Dendritic cell treated with granulocyte-macrophage colony-stimulating factor and Interleukin-4, amounts not matched to agents 40 ng/mL and 50 ng/mL, for 4 days (primary cell): ENCODE measurements at regions of chr18 and their contacts with region 1.

Region 1: DNA sequence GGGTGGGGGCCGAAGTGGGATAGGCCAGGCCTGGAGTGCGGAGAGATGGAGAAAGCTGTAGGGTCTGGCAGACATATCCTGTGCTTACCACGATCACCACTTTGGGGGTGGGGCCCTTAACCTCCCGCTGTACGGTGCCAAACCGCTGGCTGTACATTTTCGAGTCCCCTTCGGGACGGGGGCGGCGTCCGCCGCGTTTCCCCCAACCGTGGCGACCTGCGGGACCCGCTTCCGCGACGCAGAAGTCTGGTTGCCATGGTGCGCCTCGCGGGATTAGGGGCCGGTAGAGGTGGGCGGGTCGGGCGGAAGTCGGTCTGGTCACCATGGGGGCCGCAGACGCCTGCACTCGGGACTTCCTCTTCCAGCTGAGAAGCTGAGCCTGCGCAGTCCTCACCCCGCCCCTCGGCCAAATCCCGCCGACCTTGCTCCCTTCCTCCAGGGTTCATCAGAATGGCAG is at the start of gene CFAP53:
- H3K4me3 Mint-ChIP-seq: peak within 1 kb of the TSS; percentile 86
- H3K27ac Mint-ChIP-seq: peak within 1 kb of the TSS; percentile 81
- H3K4me1 Mint-ChIP-seq: peaks cover 27% of the 10 kb centered on the region
- H3K27me3 Mint-ChIP-seq: peaks cover 18% of the 10 kb centered on the region

Region 2: GRCh38 chr18:50231621-50232020 is 34.7 kb before region 1 on chr18:
- intact Hi-C with region 1: no loop called
- H3K4me3 Mint-ChIP-seq: no peak overlapping the region
- H3K27ac Mint-ChIP-seq: no peak overlapping the region
- H3K4me1 Mint-ChIP-seq: no peaks in the 10 kb centered on the region
- H3K27me3 Mint-ChIP-seq: peaks cover 13% of the 10 kb centered on the region

Region 3: GRCh38 chr18:50281295-50281971 is 15.2 kb after region 1 on chr18 and contains the start of gene MBD1:
- intact Hi-C with region 1: loop called (anchors 1 kb)
- H3K4me3 Mint-ChIP-seq: peak within 1 kb of the TSS; percentile 95
- H3K27ac Mint-ChIP-seq: peak within 1 kb of the TSS; percentile 92
- H3K4me1 Mint-ChIP-seq: peaks cover 64% of the 10 kb centered on the region
- H3K27me3 Mint-ChIP-seq: no peaks in the 10 kb centered on the region

Region 4: DNA sequence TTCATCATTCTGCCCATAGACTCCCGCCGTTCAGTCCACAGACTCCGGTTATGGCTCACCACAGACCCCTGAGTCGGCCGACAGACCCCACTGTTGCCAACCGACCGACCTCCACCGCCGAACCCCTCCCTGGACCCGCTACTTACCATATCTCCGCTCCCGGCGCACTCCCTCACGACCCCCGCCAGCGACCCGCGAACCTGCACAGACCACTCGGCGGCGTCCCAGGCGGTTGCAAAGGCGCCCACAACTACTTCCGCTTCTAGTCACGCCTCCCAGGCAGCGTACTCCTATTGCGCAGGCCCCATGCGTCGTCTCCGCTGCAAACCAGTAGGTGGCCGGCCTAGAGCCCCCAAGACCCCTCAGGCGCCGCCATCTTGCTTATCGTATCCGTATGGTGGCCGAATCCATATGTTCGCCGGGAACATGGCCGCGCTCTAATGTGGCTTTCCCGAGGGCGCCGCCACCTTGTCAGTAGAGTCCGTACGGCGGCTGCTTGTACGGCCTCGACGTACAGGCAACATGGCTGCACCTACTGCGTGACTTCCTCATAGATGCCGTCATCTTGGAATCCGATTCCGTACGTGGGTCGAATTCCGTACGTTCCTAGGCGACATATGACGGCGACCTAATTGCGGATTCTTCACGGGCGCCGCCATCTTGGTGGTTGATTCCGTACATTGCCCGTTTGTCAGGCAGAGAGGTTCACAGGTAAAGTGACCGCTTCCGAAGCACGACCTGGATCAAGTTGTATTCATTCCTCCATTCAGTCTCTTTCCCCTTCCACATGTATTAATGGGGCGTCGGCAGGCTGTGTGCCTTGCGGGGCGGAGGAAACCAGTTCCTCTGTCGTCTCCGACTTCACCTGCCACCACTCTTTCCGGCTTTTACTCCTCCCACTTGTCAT is 21.4 kb after region 1 on chr18 and contains the start of gene CXXC1:
- intact Hi-C with region 1: loop called (anchors 1 kb)
- H3K4me3 Mint-ChIP-seq: peak within 1 kb of the TSS; percentile 92
- H3K27ac Mint-ChIP-seq: peak within 1 kb of the TSS; percentile 90
- H3K4me1 Mint-ChIP-seq: peaks cover 49% of the 10 kb centered on the region
- H3K27me3 Mint-ChIP-seq: no peaks in the 10 kb centered on the region

Region 5: DNA sequence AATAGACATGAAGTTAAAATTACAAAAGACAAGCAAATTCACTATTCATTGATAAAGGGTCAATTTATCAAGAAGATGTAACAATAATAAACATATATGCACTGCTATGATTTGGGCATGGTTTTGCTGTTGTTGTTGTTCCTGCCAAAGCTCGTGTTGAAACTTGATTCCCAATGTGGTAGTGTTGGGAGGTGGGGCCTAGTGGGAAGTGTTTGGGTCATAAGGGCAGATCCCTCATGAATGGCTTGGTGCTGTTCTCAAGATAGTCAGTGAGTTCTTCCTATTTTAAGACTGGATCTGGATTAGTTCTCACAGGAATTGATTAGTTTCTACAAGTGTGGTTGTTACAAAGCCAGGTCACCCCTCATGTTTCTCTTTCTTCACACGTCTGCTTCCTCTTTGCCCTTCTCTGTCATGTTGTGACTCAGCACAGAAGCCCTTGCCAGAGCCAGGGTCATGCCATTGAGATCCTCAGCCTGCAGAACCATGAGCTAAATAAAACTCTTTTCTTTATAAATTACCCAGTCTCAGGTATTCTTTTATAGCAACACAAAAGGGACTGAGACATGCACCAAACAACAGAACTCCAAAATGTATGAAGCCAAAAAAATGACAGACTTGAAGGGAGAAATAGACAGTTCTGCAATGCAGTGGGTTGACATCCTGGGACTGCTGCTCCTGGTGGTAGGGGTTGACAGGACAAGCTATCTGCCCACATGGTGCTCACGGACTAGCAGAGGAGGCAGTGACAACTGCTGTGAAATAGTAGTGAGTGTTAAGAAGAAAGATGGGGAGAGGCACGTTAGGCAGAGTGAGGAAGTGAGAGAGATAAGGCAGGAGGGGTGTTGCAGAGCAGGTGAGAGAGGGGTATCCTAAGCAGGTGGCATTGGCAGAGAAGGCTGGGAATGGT is 90.0 kb after region 1 on chr18:
- intact Hi-C with region 1: loop called (anchors 5 kb)
- H3K4me3 Mint-ChIP-seq: peak overlapping the region; percentile 20
- H3K27ac Mint-ChIP-seq: peak overlapping the region; percentile 21
- H3K4me1 Mint-ChIP-seq: peaks cover 18% of the 10 kb centered on the region
- H3K27me3 Mint-ChIP-seq: peaks cover 16% of the 10 kb centered on the region

Region 6: DNA sequence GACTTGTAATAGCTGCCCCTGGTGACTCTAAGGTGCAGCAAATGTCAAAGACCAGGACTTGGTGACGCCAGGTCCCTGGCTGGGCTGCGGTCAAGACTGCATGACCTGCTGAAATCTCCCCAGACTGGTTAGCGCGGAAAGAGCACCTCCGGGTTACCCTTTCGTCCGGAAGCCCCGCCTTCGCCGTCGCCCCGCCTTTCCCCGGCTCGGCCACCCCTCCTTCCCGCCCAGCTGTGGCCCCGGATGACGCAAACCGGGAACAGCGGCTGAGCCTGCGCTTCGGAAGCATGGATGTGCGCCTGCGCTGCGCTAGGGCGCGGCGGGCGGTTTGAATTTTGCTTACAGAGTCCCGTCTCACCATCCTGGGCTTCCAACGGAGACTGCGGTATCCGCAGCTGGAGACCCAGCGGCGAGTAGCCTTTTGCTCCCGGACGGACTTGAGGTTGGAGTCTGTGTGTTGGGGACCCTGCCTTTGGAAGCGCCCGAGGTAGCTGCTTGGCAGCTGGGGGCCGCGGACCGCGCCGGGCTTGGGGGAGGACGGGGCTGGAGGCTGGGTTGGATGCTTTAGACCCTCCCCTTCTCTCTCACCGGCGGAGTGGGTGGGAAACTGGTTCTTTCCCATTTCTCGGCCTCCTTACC is 108.6 kb after region 1 on chr18 and contains the start of gene SKA1:
- intact Hi-C with region 1: loop called (anchors 1 kb)
- H3K4me3 Mint-ChIP-seq: peak within 1 kb of the TSS; percentile 73
- H3K27ac Mint-ChIP-seq: peak within 1 kb of the TSS; percentile 88
- H3K4me1 Mint-ChIP-seq: peaks cover 11% of the 10 kb centered on the region
- H3K27me3 Mint-ChIP-seq: peaks cover 3% of the 10 kb centered on the region